ENCODE measurements at regions of chr3 and their contacts with region 1.

Region 1: DNA sequence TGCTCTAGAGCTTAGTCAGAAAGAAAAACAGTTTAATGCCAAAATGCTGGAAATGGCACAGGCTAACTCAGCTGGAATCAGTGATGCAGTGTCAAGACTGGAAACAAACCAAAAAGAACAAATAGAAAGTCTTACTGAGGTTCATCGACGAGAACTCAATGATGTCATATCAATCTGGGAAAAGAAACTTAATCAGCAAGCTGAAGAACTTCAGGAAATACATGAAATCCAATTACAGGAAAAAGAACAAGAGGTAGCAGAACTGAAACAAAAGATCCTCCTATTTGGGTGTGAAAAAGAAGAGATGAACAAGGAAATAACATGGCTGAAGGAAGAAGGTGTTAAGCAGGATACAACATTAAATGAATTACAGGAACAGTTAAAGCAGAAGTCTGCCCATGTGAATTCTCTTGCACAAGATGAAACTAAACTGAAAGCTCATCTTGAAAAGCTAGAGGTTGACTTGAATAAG is 150.5 kb upstream of the LRRFIP2 start:
- DNase-seq: no peak
- ATAC-seq: no peak
- H3K4me3 ChIP-seq: no peak overlapping the region
- H3K27ac ChIP-seq: no peak overlapping the region
- H3K4me1 ChIP-seq: no peaks in the 10 kb centered on the region
- H3K27me3 ChIP-seq: no peaks in the 10 kb centered on the region
- CTCF ChIP-seq: no peak

Region 2: GRCh38 chr3:37308247-37308646 is 16.6 kb before region 1 on chr3:
- CTCF ChIA-PET with region 1: no interaction called
- POLR2A ChIA-PET with region 1: interaction called, 10 read pairs
- intact Hi-C with region 1: no loop called
- DNase-seq: peak; percentile 66
- ATAC-seq: peak; percentile 46
- H3K4me3 ChIP-seq: no peak overlapping the region
- H3K27ac ChIP-seq: no peak overlapping the region
- H3K4me1 ChIP-seq: no peaks in the 10 kb centered on the region
- H3K27me3 ChIP-seq: no peaks in the 10 kb centered on the region
- CTCF ChIP-seq: peak; percentile 63

Region 3: GRCh38 chr3:37729119-37729518 is 404.2 kb after region 1 on chr3:
- CTCF ChIA-PET with region 1: interaction called, 17 read pairs
- POLR2A ChIA-PET with region 1: no interaction called
- intact Hi-C with region 1: no loop called
- DNase-seq: no peak
- ATAC-seq: no peak
- H3K4me3 ChIP-seq: no peak overlapping the region
- H3K27ac ChIP-seq: no peak overlapping the region
- H3K4me1 ChIP-seq: no peaks in the 10 kb centered on the region
- H3K27me3 ChIP-seq: peaks cover 76% of the 10 kb centered on the region
- CTCF ChIP-seq: no peak

Region 4: DNA sequence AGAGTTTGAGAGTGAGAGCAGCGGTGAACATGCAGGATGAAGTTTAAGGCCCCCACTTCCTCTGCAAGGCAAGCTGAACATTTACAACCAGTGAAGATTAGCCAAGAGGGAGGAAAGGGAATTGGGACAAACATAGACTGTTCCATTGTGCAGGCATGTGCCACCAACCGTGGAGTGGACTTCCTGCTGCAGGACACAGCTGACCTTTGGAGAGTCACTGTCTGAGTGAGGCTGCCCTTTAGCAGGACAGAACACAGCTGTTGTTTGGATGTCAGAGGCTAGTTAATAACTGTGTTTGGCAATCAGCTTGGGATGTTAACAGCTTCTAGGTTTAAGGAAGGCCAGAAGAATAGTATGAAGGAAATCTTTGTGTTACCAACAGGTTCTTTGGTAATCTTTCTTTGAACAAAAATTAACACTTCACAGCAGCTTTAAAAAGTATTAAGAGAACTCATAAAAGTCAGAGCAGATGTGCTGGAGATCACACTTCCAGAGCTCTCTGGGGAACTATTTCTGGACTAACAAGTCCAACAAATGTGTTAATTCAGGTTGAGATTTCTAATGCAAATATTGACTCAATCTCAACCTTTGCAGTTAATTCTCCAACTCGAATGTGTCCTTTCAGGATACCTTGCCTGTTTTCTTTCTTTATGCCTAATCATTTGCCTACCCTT is 568.2 kb after region 1 on chr3:
- CTCF ChIA-PET with region 1: no interaction called
- POLR2A ChIA-PET with region 1: no interaction called
- intact Hi-C with region 1: no loop called
- DNase-seq: no peak
- ATAC-seq: no peak
- H3K4me3 ChIP-seq: no peak overlapping the region
- H3K27ac ChIP-seq: no peak overlapping the region
- H3K4me1 ChIP-seq: peaks cover 4% of the 10 kb centered on the region; the same call in 1 of the 2 replicates
- H3K27me3 ChIP-seq: peaks cover 22% of the 10 kb centered on the region; the same call in 1 of the 2 replicates
- CTCF ChIP-seq: no peak

Measured in PC-3 (cell line).